Activated naive CD4-positive, alpha-beta T cell treated with anti-CD3 and anti-CD28 coated beads for 36 hours (primary cell): ENCODE measurements at regions of chr4 and their contacts with region 1.

Region 1: DNA sequence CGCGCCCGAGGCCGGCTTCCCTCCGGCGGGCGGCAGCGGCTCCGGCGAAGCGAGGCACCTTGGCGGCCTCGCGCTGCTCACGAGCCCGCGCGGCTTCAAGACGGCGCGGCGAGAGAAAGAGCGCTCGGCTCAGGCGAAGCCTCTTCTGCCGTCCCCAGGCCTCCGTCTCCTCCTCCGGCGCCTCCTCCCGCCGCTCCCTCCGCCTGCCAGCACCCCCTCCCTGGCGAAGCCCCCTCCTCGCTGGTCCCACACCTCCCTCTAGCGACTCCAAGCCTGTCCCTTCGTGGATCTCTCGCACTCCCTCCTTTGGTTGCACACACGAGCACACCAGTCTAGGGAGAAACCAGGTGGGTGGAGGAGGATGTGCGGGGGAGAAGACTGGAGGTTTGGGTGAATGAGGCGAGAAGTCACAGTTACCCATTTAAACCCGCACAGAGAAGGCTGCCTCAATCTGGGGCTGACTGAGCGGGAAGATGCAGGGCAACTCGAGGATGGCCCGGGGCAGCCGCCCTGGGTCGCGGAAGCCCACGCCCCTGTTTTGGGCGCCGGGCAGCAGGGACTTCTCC is at the start of gene CAMK2D:
- DNase-seq: peak; percentile 96
- H3K4me3 Mint-ChIP-seq: peak within 1 kb of the TSS; percentile 95
- H3K27ac Mint-ChIP-seq: peak within 1 kb of the TSS; percentile 99
- H3K4me1 Mint-ChIP-seq: peaks cover 37% of the 10 kb centered on the region
- H3K27me3 Mint-ChIP-seq: no peaks in the 10 kb centered on the region
- total RNA-seq, gene CAMK2D: 75.7 to 78.3 TPM

Region 2: GRCh38 chr4:112361181-112361791 is 1400.4 kb before region 1 on chr4:
- CTCF ChIA-PET with region 1: no interaction called
- intact Hi-C with region 1: no loop called
- DNase-seq: peak; percentile 77
- H3K4me3 Mint-ChIP-seq: no peak overlapping the region
- H3K27ac Mint-ChIP-seq: no peak overlapping the region
- H3K4me1 Mint-ChIP-seq: peaks cover 2% of the 10 kb centered on the region
- H3K27me3 Mint-ChIP-seq: no peaks in the 10 kb centered on the region

Region 3: DNA sequence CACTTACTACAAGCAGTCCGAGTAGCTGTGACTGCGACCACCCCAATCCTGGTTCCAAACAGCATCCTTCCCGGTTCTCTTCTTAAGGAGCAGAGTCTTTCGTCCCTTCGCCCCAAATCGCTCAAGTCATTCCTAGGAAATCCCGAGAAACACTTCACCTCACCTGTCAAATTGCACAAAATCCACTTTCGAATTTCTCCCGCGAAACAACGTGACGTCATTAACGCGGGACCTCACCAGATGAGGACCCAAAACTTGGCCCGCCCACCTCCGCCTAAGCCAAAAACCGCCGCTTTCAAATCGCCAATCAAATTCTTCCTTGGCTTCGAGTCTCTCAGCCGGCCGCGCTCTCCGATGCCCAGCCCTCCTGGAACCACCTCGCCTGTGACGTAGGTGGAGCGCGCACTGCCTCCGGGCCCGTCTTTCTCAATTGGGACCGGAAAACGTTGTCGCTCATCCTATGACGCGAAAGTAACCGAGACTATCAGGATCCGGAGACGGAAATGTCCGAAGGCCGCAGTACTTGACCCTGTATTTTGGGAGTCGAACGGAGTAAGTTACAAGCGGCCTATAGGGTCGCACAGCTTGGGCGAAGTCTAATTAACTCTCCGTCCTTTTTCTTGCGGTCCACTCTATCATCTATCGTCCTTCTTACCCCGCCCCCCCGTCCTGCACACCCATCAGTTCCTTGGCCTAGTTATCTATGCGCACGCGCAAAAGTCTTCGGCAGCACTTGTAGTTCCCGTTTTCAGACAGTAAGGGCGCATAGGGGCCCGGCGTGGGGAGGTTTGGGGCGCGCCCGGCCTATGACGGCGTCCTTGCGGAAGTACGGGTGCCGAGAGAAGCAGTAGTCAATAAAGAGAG is 1124.8 kb before region 1 on chr4 and contains the starts of genes LARP7 and ZGRF1:
- CTCF ChIA-PET with region 1: no interaction called
- intact Hi-C with region 1: loop called (anchors 1 kb)
- DNase-seq: peak; percentile 99
- H3K4me3 Mint-ChIP-seq: no peak within 1 kb of the TSS
- H3K27ac Mint-ChIP-seq: peak within 1 kb of the TSS; percentile 16
- H3K4me1 Mint-ChIP-seq: peaks cover 27% of the 10 kb centered on the region
- H3K27me3 Mint-ChIP-seq: no peaks in the 10 kb centered on the region
- total RNA-seq, gene LARP7: 41.5 to 41.9 TPM
- total RNA-seq, gene ZGRF1: 40.0 to 43.0 TPM

Region 4: DNA sequence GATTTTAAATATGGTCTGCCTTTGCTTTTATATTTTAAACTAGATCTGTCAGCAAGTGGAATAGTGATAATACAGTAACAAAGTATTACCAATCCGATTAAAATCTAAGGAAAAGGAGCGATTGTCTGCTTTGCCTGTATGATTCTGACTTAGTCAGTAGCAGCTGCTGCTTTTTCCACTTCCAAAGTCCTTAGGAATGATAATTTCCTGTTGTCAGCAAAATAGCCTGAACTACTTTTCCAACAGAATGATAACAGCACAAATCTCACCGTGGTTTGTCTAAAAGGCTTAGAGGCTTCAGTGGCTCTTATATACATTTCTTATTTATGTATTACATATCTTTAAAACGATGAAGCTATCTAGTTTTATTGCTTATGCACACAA is 422.3 kb before region 1 on chr4:
- CTCF ChIA-PET with region 1: no interaction called
- intact Hi-C with region 1: no loop called
- DNase-seq: no peak
- H3K4me3 Mint-ChIP-seq: no peak overlapping the region
- H3K27ac Mint-ChIP-seq: no peak overlapping the region
- H3K4me1 Mint-ChIP-seq: no peaks in the 10 kb centered on the region
- H3K27me3 Mint-ChIP-seq: peaks cover 23% of the 10 kb centered on the region

Region 5: DNA sequence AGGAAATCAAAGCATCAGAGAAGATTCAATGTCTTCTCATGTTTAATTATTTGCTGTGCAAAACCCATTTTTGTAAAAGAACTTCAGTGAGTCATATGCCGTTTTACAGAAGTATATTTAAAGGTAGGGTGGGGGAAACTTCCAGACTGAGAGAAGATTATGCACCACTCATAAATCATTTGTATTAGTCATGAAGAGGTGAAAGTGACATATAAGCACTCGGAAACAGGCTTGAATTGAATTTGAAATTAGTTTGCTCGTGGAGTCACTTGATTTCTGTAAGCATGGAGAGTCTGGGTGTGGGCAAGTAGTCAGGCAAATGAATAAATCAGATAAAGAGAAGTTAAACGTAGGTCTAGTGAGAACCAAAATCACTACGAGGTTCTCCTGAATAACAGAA is 377.1 kb before region 1 on chr4:
- CTCF ChIA-PET with region 1: no interaction called
- intact Hi-C with region 1: loop called (anchors 1 kb)
- DNase-seq: peak; percentile 18
- H3K4me3 Mint-ChIP-seq: no peak overlapping the region
- H3K27ac Mint-ChIP-seq: peak overlapping the region; percentile 64
- H3K4me1 Mint-ChIP-seq: peaks cover 32% of the 10 kb centered on the region
- H3K27me3 Mint-ChIP-seq: peaks cover 10% of the 10 kb centered on the region

Region 6: DNA sequence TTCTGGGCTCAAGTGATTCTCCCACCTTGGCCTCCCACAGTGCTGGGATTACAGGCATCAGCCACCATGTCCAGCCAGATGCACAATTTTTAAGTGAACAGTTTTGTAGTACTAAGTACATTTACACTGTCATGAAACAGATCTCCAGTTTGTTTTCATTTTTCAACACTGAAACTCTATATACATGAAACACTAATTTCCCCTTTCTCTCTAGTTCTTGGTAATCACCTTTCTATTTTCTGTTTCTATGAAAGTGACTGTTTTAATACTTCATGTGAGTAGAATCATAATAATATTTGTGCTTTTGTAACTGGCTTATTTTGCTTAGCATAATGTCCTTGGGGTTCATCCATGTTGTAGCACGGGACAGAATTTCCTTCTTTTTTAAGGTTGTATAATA is 237.6 kb before region 1 on chr4:
- CTCF ChIA-PET with region 1: no interaction called
- intact Hi-C with region 1: loop called (anchors 1 kb)
- DNase-seq: no peak
- H3K4me3 Mint-ChIP-seq: no peak overlapping the region
- H3K27ac Mint-ChIP-seq: no peak overlapping the region
- H3K4me1 Mint-ChIP-seq: peaks cover 15% of the 10 kb centered on the region
- H3K27me3 Mint-ChIP-seq: no peaks in the 10 kb centered on the region

Region 7: DNA sequence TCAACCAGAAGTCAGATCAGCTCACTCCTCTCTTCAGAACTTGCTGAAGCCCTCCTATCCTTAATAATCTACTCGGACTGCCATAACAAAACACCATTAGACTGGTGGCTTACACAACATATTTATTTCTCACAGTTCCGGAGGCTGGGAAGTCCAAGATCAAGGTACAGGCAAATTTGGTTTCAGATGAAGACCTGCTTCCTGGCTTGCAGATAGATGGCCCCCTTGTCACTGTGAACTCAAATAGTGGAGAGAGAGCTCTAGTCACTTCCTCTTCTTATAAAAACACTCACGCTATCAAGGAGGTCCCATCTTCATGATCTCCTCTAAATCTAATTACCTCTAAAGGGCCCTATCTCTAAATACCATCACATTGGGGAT is 125.3 kb before region 1 on chr4:
- CTCF ChIA-PET with region 1: no interaction called
- intact Hi-C with region 1: loop called (anchors 1 kb)
- DNase-seq: peak; percentile 26
- H3K4me3 Mint-ChIP-seq: peak overlapping the region; percentile 23
- H3K27ac Mint-ChIP-seq: peak overlapping the region; percentile 83
- H3K4me1 Mint-ChIP-seq: peaks cover 46% of the 10 kb centered on the region
- H3K27me3 Mint-ChIP-seq: no peaks in the 10 kb centered on the region

Region 8: DNA sequence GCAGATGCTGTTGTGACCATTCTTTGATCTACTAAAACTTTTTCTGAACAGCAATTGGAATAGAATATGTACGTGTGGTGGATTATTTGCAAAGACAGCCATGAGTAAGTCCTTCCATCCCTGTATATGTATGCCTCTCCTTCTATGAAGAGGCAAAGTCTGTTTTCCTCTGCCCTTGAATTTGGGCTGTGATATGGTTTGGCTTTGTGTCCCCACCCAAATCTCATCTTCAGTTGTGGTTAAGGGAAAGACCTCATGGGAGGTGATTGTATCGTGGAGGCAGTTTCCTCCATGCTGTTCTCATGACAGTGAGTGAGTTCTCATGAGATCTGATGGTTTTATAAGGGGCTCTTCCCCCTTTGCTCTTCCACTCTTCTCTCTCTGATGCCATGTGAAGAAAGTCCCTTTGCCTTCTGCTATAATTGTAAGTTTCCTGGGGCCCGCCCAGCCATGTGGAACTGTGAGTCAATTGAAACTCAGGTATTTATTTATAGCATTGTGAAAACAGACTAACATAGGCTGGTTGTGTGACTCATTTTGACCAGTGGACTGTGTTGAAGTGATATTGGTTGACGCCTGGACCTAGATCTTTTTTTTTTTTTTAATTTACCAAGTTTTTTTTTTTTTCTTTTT is 108.2 kb after region 1 on chr4:
- CTCF ChIA-PET with region 1: no interaction called
- intact Hi-C with region 1: loop called (anchors 1 kb)
- DNase-seq: peak; percentile 80
- H3K4me3 Mint-ChIP-seq: no peak overlapping the region
- H3K27ac Mint-ChIP-seq: peak overlapping the region; percentile 82
- H3K4me1 Mint-ChIP-seq: peaks cover 19% of the 10 kb centered on the region
- H3K27me3 Mint-ChIP-seq: no peaks in the 10 kb centered on the region

Region 9: DNA sequence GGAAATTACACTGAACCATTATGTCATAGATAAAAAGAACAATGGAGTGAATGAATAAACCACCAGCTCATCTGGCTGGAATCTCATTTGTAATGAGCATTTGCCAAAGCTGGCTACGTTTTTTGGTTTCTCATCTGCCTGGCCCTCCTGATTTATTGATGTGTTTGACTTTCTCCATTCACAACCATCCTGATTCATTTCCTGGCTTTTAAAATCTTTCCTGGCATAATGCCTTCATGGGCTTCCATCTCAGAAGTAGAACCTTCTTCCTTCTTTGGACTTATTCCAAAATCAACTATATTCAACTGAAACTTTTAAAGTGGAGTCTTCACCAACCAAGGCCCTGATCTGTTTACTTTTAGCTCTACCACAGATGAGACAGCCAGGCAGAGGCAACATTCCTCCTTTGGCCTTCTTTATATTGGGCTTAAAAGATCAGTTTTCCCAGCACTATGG is 253.8 kb after region 1 on chr4:
- CTCF ChIA-PET with region 1: no interaction called
- intact Hi-C with region 1: no loop called
- DNase-seq: no peak
- H3K4me3 Mint-ChIP-seq: no peak overlapping the region
- H3K27ac Mint-ChIP-seq: no peak overlapping the region
- H3K4me1 Mint-ChIP-seq: peaks cover 7% of the 10 kb centered on the region
- H3K27me3 Mint-ChIP-seq: no peaks in the 10 kb centered on the region